ENCODE measurements at regions of chr7 and their contacts with region 1.

Region 1: DNA sequence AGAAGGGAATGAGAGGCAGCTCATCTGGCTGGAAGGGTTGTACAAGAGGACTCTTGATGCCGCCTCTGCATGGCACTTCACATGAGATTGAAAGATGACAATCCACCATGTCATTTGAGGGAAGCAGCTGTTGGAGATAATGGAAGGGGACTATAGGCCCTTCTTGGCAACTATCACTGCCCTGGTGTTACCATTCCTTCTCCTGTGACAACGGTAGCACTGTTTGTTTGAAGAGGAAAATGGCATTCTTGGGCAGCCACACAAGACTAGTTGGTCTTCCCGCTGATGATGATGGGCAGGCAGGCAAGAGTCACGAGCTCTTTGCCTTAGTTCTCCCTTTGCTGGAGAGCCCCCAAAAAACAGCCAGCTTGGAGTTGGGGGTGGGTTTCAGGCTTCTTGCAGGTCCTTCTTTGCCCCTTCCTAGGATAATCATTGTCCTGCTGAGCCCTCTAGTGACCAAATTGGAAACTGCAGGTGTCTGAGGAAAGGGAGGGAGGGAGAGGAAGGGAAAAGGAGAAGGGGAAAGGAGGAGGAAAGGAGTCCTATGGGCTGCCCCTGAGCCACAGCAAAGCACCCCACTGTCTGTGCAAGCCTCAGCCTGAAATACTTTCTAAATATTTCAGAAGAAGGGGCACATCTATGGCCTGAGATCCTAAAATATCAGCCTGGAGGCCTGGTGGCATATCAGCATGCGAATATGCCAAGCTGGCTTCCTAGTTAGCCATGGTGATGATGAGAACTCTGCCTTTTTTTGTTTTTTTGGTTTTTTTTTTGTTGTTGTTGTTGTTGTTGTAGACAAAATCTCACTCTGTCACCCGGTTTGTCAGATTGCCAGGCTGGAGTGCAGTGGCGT is 165.6 kb upstream of the KMT2E start:
- DNase-seq: peak; percentile 51
- H3K4me3 Mint-ChIP-seq: no peak overlapping the region
- H3K27ac Mint-ChIP-seq: no peak overlapping the region
- H3K4me1 Mint-ChIP-seq: no peaks in the 10 kb centered on the region
- H3K27me3 Mint-ChIP-seq: peaks cover 31% of the 10 kb centered on the region
- CTCF ChIP-seq: peak; percentile 85

Region 2: DNA sequence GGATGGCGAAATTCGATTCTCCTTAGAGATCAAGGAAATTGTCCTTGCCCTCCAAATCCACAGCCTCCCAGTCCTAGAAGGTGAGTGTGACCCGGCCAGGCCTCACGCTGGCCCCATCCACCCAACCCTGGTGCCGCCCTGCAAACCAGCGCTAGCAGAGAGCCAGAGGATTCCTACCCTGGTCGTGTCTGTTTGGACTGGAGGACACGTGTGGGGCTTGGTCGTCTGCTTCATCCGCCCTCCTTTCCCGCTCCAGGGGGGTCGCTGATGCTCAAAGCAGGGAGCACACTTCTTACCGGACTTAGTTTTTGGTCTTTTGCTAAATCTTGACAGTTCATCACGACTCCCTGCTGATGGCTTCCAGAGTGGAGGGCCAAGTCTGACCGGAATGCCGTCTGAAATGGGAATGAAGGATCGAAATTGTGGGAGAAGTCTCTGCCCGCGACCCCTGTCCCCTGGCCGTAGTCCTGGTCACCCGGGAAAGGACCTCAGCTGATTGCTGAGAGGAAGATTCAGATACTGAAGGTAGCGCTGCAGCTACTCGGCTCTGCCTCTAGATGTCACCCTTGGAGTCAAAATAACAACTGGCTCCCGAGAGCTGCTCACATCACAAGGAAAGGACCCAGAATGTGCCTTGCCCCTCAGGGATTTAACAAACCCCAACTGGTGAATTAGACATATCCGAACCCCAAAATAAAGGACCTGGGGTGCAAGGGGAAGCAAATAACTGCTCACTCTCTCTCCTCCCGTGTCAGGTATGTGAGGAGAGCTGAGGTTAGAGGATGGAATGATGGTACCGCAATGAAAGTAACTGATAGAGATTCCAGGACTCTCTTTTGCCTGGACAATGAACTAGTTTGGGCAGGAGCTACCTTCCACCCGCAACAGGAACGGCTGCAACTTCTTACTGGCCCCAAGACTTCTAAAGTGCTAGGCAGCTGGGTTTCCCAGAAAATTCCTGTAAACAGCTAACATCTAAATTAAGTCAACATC is 617.0 kb before region 1 on chr7:
- CTCF ChIA-PET with region 1: interaction called, 4 read pairs
- intact Hi-C with region 1: loop called (anchors 2 kb)
- DNase-seq: peak; percentile 34
- H3K4me3 Mint-ChIP-seq: no peak overlapping the region
- H3K27ac Mint-ChIP-seq: no peak overlapping the region
- H3K4me1 Mint-ChIP-seq: no peaks in the 10 kb centered on the region
- H3K27me3 Mint-ChIP-seq: peaks cover 22% of the 10 kb centered on the region
- CTCF ChIP-seq: peak; percentile 33

Region 3: DNA sequence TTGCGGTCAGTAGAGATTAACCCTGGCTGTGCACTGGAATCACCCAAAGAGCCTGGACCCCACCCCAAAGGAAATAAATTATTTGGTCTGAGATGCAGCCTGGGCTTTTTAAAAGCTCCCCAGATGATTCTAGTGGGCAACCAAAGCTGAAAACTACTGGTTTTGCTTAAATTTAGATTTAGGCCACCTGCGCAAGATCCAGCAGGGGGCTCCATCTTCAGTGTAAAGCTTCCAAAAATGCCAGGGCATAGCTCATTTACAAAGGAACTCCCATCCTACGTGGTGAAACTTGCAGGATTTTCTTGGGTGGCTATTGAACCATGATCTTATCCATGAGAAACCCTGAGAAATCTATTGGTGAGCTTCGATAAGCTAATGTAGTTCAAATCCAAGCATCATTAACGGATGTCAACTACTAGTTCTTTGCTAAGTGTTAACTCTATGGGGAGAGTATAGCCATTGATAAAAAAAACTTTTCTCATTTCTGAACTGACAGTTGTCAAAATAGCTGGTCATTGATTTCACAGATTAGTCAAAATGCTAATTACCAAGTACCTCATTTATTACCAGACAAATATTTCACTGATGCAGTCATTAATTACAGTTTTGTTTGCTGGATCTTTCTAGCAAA is 204.7 kb before region 1 on chr7:
- CTCF ChIA-PET with region 1: no interaction called
- intact Hi-C with region 1: loop called (anchors 1 kb)
- DNase-seq: peak; percentile 3
- H3K4me3 Mint-ChIP-seq: no peak overlapping the region
- H3K27ac Mint-ChIP-seq: no peak overlapping the region
- H3K4me1 Mint-ChIP-seq: no peaks in the 10 kb centered on the region
- H3K27me3 Mint-ChIP-seq: peaks cover 25% of the 10 kb centered on the region
- CTCF ChIP-seq: no peak

Region 4: DNA sequence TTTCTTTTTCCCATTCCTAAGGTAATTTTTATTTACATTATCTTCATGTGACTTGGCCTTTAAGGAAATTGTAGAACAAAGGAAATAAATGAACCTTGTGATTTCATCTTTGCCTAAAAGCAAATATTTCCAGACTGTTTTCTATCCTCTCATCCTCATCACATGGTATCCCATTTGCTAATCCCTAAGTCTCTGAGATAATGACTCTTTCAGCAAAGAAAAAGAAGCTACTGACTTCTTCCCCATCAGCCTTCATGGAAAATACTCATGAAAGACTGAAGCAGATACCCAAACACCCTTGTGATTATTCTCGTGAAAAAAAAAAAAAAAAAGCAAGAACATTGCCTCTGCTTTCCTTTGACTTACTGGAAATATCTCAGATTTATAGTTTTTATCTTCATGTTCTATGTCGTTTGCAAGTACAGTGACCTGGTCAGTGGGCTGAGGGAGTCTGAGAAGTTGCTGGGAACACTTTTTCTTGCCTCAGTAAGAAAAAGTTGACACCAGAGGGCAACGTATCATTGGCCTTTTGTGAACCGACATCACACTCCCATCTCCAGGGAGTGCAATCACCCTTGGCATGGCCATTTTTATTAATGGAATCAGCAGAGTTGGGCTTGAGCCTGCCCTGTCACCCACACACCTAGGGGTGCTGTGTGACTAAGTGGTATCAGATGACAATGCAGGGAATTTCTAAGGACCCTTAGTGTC is 80.4 kb before region 1 on chr7:
- CTCF ChIA-PET with region 1: no interaction called
- intact Hi-C with region 1: loop called (anchors 2 kb)
- DNase-seq: no peak
- H3K4me3 Mint-ChIP-seq: no peak overlapping the region
- H3K27ac Mint-ChIP-seq: no peak overlapping the region
- H3K4me1 Mint-ChIP-seq: no peaks in the 10 kb centered on the region
- H3K27me3 Mint-ChIP-seq: peaks cover 61% of the 10 kb centered on the region
- CTCF ChIP-seq: no peak